ENCODE measurements at regions of chr20 and their contacts with region 1.

Region 1: DNA sequence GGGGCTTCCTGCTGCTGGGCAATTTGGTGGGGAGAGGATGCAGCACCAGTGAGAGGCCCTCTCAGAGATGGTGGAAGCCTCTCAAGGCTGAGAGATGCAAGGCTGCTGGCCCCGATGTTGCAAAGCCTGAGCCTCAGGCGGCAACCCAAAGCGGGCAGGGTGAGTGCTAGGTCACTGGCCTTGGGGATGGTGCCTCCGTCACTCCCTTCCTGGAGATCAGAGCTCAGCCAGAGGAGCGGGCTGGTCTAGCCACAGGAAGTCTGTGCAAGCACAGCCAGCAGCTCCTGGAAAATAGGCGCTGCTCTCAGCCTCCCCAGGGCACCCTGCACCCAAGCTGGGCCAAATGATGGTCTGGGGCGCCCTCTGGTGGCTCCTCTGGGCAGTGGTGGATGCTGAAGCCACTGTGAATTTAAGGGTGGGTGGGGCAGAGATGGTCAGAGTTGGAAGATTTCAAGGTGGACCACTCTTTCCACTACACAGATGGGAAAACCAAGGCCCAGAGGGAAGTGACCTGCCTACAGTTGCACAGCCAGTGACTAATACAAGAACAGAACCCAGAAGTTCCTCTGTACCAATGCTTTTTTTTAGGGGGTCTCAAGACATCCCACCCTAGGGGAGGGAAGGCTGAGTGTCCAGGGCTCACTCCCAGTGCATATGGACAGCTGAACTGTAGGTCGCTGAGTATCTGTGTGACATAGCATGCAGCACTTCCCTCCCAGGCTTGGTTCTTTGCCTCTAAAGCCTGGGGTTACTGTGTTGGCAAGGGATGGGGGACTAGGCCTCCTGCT is 20.8 kb downstream of the C20orf203 start:
- DNase-seq: peak; percentile 91
- ATAC-seq: peak; percentile 98
- H3K4me3 Mint-ChIP-seq: peak overlapping the region; percentile 34
- H3K27ac Mint-ChIP-seq: peak overlapping the region; percentile 47
- H3K4me1 Mint-ChIP-seq: peaks cover 15% of the 10 kb centered on the region
- H3K27me3 Mint-ChIP-seq: no peaks in the 10 kb centered on the region

Region 2: DNA sequence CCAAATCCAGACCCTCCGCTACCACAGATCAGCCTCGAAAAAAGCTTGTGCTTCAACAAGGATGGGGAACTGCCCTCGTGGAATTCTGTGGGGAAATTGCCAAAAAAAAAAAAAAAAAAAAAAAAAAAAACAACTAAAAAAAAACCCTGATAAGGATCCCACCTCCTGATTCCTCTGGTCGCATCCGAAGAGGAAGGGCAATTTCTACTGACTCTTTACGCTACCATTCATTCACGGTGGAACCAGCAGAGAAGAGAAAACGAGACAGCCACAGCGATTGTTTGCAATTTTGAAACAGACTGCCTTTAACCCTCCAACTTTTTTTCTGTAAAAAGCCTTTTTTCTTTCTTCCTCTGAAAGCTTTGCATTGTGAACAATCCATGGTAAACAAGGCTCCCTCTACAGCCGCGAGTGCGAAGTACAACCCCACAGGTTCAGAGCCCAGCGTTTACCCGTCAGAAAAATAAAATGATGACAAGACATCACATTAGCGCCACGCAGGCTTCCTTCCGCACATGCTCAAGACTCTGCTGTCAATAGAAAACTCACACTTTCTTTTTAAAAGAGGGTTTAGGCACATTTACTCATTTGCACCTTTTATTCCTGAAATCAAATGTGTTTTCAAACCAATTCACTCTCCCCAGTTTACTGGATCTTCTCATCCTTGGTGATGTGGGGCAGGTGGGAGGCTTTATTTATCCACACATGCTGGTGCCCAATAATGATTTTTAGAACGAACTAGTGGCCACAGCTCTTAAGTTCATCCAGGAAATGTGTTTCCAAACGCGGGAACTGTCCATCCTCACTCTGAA is 167.8 kb before region 1 on chr20:
- CTCF ChIA-PET with region 1: interaction called, 12 read pairs
- POLR2A ChIA-PET with region 1: no interaction called
- DNase-seq: peak; percentile 90
- ATAC-seq: peak; percentile 82
- H3K4me3 Mint-ChIP-seq: peak overlapping the region; percentile 83
- H3K27ac Mint-ChIP-seq: peak overlapping the region; percentile 80
- H3K4me1 Mint-ChIP-seq: peaks cover 23% of the 10 kb centered on the region
- H3K27me3 Mint-ChIP-seq: no peaks in the 10 kb centered on the region

Region 3: GRCh38 chr20:32497589-32498224 is 155.2 kb before region 1 on chr20:
- CTCF ChIA-PET with region 1: interaction called, 12 read pairs
- POLR2A ChIA-PET with region 1: no interaction called
- DNase-seq: no peak
- ATAC-seq: no peak
- H3K4me3 Mint-ChIP-seq: no peak overlapping the region
- H3K27ac Mint-ChIP-seq: no peak overlapping the region
- H3K4me1 Mint-ChIP-seq: peaks cover 4% of the 10 kb centered on the region
- H3K27me3 Mint-ChIP-seq: no peaks in the 10 kb centered on the region

Region 4: DNA sequence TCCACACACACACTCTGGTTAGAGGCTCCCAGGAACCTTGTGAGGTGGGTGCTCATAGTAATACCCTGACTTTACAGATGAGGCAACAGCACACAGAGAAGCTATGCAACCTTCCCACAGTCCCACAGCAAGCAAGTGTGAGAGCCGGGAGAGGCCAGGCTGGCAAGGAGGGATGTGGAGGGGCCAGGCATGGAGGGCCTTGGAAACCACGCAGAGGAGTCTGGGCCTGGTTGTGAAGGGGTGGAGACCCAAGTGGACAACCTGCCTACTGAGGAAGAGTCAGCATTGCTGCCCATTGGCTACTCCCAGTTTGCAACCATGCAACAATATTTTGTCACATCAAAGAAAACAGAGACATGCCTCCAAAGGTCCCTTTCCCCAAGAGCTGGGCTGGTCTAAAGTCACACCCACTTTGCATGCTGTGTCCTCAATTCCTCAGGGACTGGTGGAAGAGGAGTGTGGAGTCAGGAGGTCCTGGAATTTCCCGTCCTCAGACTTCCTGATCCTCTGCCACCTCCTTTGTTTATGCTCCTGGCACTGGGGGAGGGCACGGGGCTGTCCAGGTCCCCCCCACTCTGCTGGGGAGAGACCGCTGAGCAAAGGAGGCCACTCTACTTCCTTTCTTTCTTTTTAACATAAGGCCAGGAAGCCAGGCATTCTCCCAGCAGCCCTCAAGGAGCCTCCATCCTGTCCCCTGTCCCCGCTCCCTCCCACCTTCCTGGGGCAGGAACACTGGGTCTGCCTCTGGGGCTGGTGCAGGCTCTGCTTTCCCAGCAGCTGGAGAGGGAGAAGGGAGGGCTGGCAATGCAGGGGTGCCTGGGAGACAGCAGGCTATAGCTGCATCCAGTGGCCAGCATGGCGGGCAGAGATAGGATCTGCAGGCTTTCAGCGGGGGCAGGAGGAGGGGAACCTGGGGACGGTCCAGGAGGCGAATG is 136.1 kb before region 1 on chr20:
- CTCF ChIA-PET with region 1: interaction called, 285 read pairs
- POLR2A ChIA-PET with region 1: interaction called, 10 read pairs
- DNase-seq: no peak
- ATAC-seq: no peak
- H3K4me3 Mint-ChIP-seq: no peak overlapping the region
- H3K27ac Mint-ChIP-seq: peak overlapping the region; percentile 43
- H3K4me1 Mint-ChIP-seq: peaks cover 53% of the 10 kb centered on the region
- H3K27me3 Mint-ChIP-seq: no peaks in the 10 kb centered on the region

Region 5: DNA sequence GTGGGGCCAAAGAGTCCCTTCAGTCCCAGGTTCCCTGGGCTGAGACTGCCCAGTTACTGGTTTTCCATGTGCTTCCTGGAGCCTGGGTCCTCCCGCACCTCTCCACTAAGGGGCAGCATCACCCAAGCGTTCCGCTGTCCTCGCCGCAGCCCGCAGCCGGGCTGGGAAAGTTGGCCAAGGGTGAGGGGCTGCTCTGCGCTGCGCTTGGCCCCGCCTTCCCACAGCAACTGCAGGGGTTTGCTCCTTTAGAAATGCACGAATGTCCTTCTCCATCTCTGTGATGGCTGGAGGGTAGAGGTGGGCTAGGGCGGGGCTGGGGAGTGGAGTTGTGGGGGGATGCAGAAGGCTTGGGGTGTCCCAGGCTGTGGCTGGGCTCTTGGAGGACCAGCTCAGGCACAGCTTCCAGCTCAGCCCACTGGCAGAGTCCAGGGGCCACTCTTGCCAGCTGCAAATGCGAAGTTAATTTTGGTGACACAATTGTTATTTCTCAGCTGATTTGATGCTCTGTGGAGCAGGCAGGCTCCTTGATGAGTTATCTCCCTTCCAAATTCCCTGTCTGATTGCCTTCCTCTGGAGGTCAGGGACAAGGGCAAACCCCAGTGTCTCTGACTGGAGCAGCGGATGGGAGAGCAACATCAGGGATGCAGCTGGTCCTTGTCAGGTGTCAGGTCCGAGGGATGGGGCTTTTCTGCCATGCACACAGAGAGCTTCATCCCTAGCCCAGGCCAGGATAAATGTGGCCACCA is 131.0 kb before region 1 on chr20:
- CTCF ChIA-PET with region 1: interaction called, 285 read pairs
- POLR2A ChIA-PET with region 1: interaction called, 10 read pairs
- DNase-seq: peak; percentile 71
- ATAC-seq: peak; percentile 79
- H3K4me3 Mint-ChIP-seq: no peak overlapping the region
- H3K27ac Mint-ChIP-seq: peak overlapping the region; percentile 80
- H3K4me1 Mint-ChIP-seq: peaks cover 56% of the 10 kb centered on the region
- H3K27me3 Mint-ChIP-seq: no peaks in the 10 kb centered on the region

Region 6: GRCh38 chr20:32528171-32528891 is 124.6 kb before region 1 on chr20:
- CTCF ChIA-PET with region 1: interaction called, 285 read pairs
- POLR2A ChIA-PET with region 1: interaction called, 10 read pairs
- DNase-seq: no peak
- ATAC-seq: peak; percentile 48
- H3K4me3 Mint-ChIP-seq: peak overlapping the region; percentile 31
- H3K27ac Mint-ChIP-seq: peak overlapping the region; percentile 86
- H3K4me1 Mint-ChIP-seq: peaks cover 85% of the 10 kb centered on the region
- H3K27me3 Mint-ChIP-seq: no peaks in the 10 kb centered on the region

Region 7: GRCh38 chr20:32535953-32536823 is 116.7 kb before region 1 on chr20:
- CTCF ChIA-PET with region 1: interaction called, 41 read pairs
- POLR2A ChIA-PET with region 1: interaction called, 6 read pairs
- DNase-seq: peak; percentile 92
- ATAC-seq: peak; percentile 52
- H3K4me3 Mint-ChIP-seq: peak overlapping the region; percentile 77
- H3K27ac Mint-ChIP-seq: peak overlapping the region; percentile 94
- H3K4me1 Mint-ChIP-seq: peaks cover 82% of the 10 kb centered on the region
- H3K27me3 Mint-ChIP-seq: no peaks in the 10 kb centered on the region

Region 8: GRCh38 chr20:33606118-33606771 is 953.3 kb after region 1 on chr20:
- CTCF ChIA-PET with region 1: no interaction called
- POLR2A ChIA-PET with region 1: no interaction called
- DNase-seq: no peak
- ATAC-seq: no peak
- H3K4me3 Mint-ChIP-seq: no peak overlapping the region
- H3K27ac Mint-ChIP-seq: no peak overlapping the region
- H3K4me1 Mint-ChIP-seq: peaks cover 12% of the 10 kb centered on the region
- H3K27me3 Mint-ChIP-seq: no peaks in the 10 kb centered on the region

Measured in activated CD8-positive, alpha-beta T cell treated with anti-CD3 and anti-CD28 coated beads, Interleukin-2, amount 10 ng/mL, durations not matched to agents 7 days and 5 days (primary cell).